Posterior vena cava (tissue), 2 donors: ENCODE measurements at regions of chr11 and their contacts with region 1.

Region 1: DNA sequence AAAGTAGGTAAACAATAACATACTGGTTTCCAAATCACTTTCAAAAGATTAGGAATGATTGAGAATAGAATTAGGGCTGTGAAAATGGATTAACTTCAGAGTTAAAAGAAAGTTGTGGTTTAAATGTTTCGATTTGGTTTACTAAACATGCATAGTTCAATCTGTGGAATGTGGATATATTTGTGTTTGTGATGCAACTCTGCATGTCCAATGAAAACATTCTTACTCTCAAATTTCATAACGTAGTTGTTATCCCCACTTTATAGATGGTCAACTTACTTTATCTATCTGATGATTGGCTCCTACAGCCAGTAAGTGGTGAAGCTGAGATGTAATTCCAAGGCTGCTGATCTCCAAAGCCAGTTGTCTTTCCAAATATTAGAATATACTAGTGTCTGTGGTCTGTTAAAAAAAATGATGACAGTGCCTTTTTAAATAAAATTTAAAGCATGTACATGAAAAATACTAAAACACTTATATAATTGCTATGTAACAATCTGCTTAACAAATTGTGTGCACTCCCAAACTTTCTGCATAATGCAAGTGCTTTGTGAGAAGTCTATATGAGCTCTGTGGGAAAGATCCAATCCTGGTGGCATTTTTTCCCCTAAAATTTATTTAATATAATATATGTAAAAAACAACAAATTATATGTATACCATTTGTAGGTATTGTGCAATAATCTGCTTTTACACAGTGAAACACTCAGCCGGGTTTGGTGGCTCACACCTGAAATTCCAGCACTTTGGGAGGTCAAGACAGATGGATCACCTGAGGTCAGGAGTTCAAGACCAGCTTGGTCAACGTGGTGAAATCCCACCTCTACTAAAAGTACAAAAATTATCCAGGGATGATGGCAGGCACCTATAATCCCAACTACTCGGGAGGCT is 9.7 kb upstream of the SIK3 start:
- DNase-seq: no peak

Region 2: GRCh38 chr11:116579857-116580727 is 527.9 kb before region 1 on chr11:
- intact Hi-C with region 1: loop called in 1 of 2 experiments (anchors 10 kb)
- DNase-seq: no peak

Region 3: GRCh38 chr11:116879800-116880625 is 227.9 kb before region 1 on chr11:
- intact Hi-C with region 1: loop called in 1 of 2 experiments (anchors 5 kb)
- DNase-seq: no peak